ENCODE measurements at regions of chrX and their contacts with region 1.

Region 1: GRCh38 chrX:120302434-120302833 is 8.8 kb downstream of the TMEM255A start:
- DNase-seq: peak; percentile 15
- ATAC-seq: peak; percentile 97
- H3K4me3 Mint-ChIP-seq: peak overlapping the region; percentile 50
- H3K27ac Mint-ChIP-seq: peak overlapping the region; percentile 69
- H3K4me1 Mint-ChIP-seq: peaks cover 36% of the 10 kb centered on the region
- H3K27me3 Mint-ChIP-seq: no peaks in the 10 kb centered on the region
- CTCF ChIP-seq: no peak

Region 2: DNA sequence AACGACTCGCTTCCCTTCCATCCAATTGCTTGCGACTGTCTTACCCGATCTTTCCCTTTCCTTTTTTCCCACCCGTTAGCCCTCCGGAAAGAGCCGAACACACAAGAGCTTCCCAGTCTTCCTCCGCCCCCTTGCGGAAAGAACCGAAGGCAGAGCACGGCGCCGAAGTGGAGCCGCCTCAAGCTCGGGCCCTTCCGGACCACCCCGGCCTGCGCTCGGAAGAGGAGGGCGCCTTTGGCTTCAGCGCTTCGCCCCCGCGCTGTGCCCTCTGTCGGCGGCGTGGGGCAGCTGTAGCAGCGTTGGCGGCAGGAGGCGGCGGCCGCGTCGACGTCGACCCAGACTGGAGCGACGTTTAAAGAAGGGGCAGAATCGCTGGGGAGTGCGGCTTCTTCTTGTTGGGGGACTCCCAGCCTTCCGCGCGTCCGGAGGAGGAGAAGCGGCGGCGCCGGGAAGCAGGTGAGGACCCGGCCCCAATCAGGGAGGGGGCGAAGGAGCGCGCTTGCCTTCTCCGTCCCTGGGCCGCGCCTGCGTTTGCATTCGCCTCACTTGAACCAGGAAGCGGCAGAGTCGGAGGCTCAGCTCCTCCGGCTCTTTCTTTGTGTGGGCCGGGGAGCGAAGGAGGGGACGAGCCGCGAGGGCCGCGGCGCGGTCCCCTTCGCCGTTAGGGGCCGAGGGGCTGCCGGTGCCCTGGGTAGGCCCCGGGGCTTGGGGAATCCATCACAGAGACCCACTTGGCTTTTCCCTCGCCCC is 51.7 kb before region 1 on chrX and contains the start of gene ZBTB33:
- CTCF ChIA-PET with region 1: interaction called, 4 read pairs
- POLR2A ChIA-PET with region 1: interaction called, 16 read pairs
- intact Hi-C with region 1: no loop called
- DNase-seq: peak; percentile 74
- ATAC-seq: peak; percentile 99
- H3K4me3 Mint-ChIP-seq: peak within 1 kb of the TSS; percentile 93
- H3K27ac Mint-ChIP-seq: peak within 1 kb of the TSS; percentile 93
- H3K4me1 Mint-ChIP-seq: peaks cover 14% of the 10 kb centered on the region
- H3K27me3 Mint-ChIP-seq: no peaks in the 10 kb centered on the region
- CTCF ChIP-seq: no peak
- total RNA-seq, gene ZBTB33: 17.4 and 19.8 TPM in 2 replicates

Region 3: GRCh38 chrX:120287513-120288112 is 14.8 kb before region 1 on chrX:
- CTCF ChIA-PET with region 1: no interaction called
- POLR2A ChIA-PET with region 1: interaction called, 3 read pairs
- intact Hi-C with region 1: loop called (anchors 2 kb)
- DNase-seq: no peak
- ATAC-seq: peak; percentile 71
- H3K4me3 Mint-ChIP-seq: no peak overlapping the region
- H3K27ac Mint-ChIP-seq: peak overlapping the region; percentile 50
- H3K4me1 Mint-ChIP-seq: peaks cover 15% of the 10 kb centered on the region
- H3K27me3 Mint-ChIP-seq: no peaks in the 10 kb centered on the region
- CTCF ChIP-seq: no peak

Region 4: GRCh38 chrX:121322159-121322558 is 1019.7 kb after region 1 on chrX:
- CTCF ChIA-PET with region 1: no interaction called
- POLR2A ChIA-PET with region 1: no interaction called
- intact Hi-C with region 1: no loop called
- DNase-seq: no peak
- ATAC-seq: no peak
- H3K4me3 Mint-ChIP-seq: no peak overlapping the region
- H3K27ac Mint-ChIP-seq: no peak overlapping the region
- H3K4me1 Mint-ChIP-seq: no peaks in the 10 kb centered on the region
- H3K27me3 Mint-ChIP-seq: no peaks in the 10 kb centered on the region
- CTCF ChIP-seq: no peak